Mammary epithelial cell (primary cell): ENCODE measurements at regions of chr18 and their contacts with region 1.

Region 1: GRCh38 chr18:48030616-48031480 is 100.4 kb upstream of the SMAD2 start:
- DNase-seq: peak; percentile 62
- H3K4me3 ChIP-seq: no peak overlapping the region
- H3K27ac ChIP-seq: no peak overlapping the region
- H3K4me1 ChIP-seq: peaks cover 32% of the 10 kb centered on the region
- H3K27me3 ChIP-seq: no peaks in the 10 kb centered on the region
- CTCF ChIP-seq: peak; percentile 89 to 91

Region 2: GRCh38 chr18:48105317-48105716 is 74.5 kb after region 1 on chr18:
- CTCF ChIA-PET with region 1: no interaction called
- dilution Hi-C with region 1: no loop called
- in situ Hi-C with region 1: no loop called
- intact Hi-C with region 1: loop called (anchors 2 kb)
- DNase-seq: no peak
- H3K4me3 ChIP-seq: no peak overlapping the region
- H3K27ac ChIP-seq: no peak overlapping the region
- H3K4me1 ChIP-seq: peaks cover 8% of the 10 kb centered on the region
- H3K27me3 ChIP-seq: no peaks in the 10 kb centered on the region
- CTCF ChIP-seq: peak; percentile 9 to 24

Region 3: GRCh38 chr18:48161191-48161910 is 130.5 kb after region 1 on chr18:
- CTCF ChIA-PET with region 1: no interaction called
- dilution Hi-C with region 1: no loop called
- in situ Hi-C with region 1: no loop called
- intact Hi-C with region 1: loop called (anchors 10 kb)
- DNase-seq: peak; percentile 91
- H3K4me3 ChIP-seq: peak overlapping the region; percentile 53 to 60 (median 60)
- H3K27ac ChIP-seq: peak overlapping the region; percentile 76
- H3K4me1 ChIP-seq: peaks cover 27% of the 10 kb centered on the region
- H3K27me3 ChIP-seq: no peaks in the 10 kb centered on the region
- CTCF ChIP-seq: no peak

Region 4: DNA sequence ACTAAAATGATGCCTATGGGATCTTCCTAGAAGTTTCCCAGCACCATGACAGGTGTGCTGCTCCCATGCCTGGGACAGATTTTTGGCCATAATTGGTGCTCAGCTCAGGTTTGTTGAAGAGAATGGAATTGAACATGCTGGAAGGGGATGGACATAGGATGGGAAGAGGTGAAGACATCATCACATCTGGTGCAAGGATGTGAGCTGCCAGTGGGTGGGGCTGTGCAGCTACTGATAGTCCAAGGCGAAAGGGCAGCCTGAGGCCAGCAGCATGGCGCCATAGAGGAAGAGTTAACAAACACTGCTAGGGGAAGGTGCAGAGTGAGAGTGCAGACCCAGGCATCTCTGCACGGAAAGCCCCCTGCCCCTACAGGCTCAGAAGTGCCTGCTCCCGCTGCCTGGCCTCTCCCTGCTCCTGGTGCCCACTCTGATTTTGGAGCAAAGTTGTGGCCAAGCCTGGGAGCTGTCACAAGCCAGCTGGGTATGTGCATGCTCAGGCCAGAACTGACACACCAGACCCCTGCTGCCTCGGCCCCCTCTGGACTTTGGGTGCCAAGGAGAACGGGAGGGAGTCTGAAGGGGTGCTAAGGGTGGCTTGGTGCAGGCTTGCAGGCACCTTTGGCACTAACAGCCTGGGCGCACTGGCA is 199.7 kb after region 1 on chr18:
- CTCF ChIA-PET with region 1: no interaction called
- dilution Hi-C with region 1: no loop called
- in situ Hi-C with region 1: loop called in 1 of 2 experiments (anchors 10 kb)
- intact Hi-C with region 1: loop called (anchors 1 kb)
- DNase-seq: peak; percentile 61
- H3K4me3 ChIP-seq: no peak overlapping the region
- H3K27ac ChIP-seq: no peak overlapping the region
- H3K4me1 ChIP-seq: peaks cover 41% of the 10 kb centered on the region
- H3K27me3 ChIP-seq: no peaks in the 10 kb centered on the region
- CTCF ChIP-seq: peak; percentile 82 to 85

Region 5: DNA sequence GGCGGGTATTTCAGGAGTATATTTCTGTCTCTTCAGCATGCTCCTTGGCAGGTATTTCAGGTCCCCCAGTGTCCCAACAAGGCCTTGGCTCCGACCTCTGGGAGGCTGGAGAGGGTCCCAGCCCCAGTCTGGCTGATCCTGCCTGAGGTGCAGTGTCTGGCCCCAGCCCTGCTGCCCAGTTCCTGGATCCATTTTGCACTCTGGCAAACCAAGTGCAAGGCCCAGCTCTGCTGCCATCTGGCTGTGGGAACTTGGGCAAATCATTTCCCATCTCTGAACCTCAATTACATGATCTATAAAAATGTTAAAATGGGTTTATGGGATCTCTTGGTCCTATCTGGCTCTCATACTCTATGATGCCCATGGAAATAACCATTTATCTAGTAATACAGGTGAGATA is 314.7 kb after region 1 on chr18:
- CTCF ChIA-PET with region 1: no interaction called
- dilution Hi-C with region 1: no loop called
- in situ Hi-C with region 1: loop called (anchors 5 to 10 kb)
- intact Hi-C with region 1: no loop called
- DNase-seq: no peak
- H3K4me3 ChIP-seq: no peak overlapping the region
- H3K27ac ChIP-seq: no peak overlapping the region
- H3K4me1 ChIP-seq: peaks cover 11% of the 10 kb centered on the region
- H3K27me3 ChIP-seq: no peaks in the 10 kb centered on the region
- CTCF ChIP-seq: peak; percentile 45 to 67

Region 6: DNA sequence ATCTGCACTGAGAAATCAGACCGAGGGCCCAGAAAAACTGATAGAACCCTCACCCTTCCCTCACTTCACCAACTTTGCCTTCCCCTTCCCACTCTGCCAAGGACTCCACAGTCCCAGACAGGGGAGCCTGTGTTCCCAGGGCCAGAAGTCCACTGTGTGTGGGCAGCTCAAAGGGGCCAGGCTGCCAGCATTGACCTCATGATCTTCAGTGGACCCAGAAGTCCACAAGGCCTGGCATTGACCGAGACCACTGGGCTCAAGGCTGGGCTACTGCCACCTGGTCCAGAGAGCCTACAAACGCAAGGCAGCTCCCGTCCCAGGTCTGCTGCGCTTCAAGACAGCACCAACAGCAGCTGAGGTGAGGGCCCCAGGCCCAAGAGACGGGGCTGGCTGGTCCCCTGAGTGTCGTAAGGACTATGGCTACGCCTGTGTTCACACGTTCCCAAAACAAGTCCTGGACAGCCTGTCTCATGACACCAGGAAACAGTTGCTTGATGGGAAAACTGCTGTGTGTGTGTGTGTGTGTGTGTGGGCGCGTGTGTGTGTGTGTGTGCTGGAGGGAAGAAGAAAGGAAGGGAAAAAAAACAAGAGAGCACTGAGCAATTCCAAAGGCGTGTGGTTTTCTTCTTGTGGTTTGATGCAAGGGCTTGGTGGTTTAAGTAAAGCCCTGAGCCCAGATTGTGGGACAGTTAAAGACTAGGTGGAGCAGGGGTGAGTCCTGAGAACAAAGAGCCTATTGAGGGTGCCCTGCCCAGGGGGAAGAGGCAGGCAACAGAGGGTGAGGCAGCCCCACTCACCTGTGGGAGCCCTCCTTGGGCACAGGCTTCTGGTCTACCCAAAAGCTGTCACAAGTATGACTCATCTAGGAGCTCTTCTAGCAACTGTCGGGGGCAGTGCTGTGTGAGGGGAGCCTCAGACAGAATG is 425.0 kb after region 1 on chr18:
- CTCF ChIA-PET with region 1: no interaction called
- dilution Hi-C with region 1: no loop called
- in situ Hi-C with region 1: loop called in 1 of 2 experiments (anchors 5 kb)
- intact Hi-C with region 1: no loop called
- DNase-seq: peak; percentile 100
- H3K4me3 ChIP-seq: no peak overlapping the region
- H3K27ac ChIP-seq: peak overlapping the region; percentile 80
- H3K4me1 ChIP-seq: peaks cover 58% of the 10 kb centered on the region
- H3K27me3 ChIP-seq: no peaks in the 10 kb centered on the region
- CTCF ChIP-seq: no peak